Caco-2 (cell line): ENCODE measurements at regions of chr2 and their contacts with region 1.

Region 1: GRCh38 chr2:54531558-54531957 is 75.4 kb downstream of the SPTBN1 start:
- DNase-seq: no peak
- H3K4me3 ChIP-seq: no peak overlapping the region
- H3K4me3 Mint-ChIP-seq: no peak overlapping the region
- H3K27ac Mint-ChIP-seq: peak overlapping the region; percentile 99
- H3K4me1 ChIP-seq: peaks cover 39% of the 10 kb centered on the region
- H3K4me1 Mint-ChIP-seq: peaks cover 60% of the 10 kb centered on the region
- H3K27me3 ChIP-seq: no peaks in the 10 kb centered on the region
- H3K27me3 Mint-ChIP-seq: no peaks in the 10 kb centered on the region
- CTCF ChIP-seq: no peak

Region 2: GRCh38 chr2:54545702-54546450 is 14.3 kb after region 1 on chr2:
- CTCF ChIA-PET with region 1: interaction called, 3 read pairs
- POLR2A ChIA-PET with region 1: interaction called, 3 read pairs
- intact Hi-C with region 1: loop called (anchors 1 kb)
- DNase-seq: peak; percentile 55 to 67
- H3K4me3 ChIP-seq: no peak overlapping the region
- H3K4me3 Mint-ChIP-seq: no peak overlapping the region
- H3K27ac Mint-ChIP-seq: peak overlapping the region; percentile 75
- H3K4me1 ChIP-seq: peaks cover 53% of the 10 kb centered on the region
- H3K4me1 Mint-ChIP-seq: peaks cover 19% of the 10 kb centered on the region
- H3K27me3 ChIP-seq: no peaks in the 10 kb centered on the region
- H3K27me3 Mint-ChIP-seq: no peaks in the 10 kb centered on the region
- CTCF ChIP-seq: no peak

Region 3: GRCh38 chr2:54704688-54705605 is 173.4 kb after region 1 on chr2:
- CTCF ChIA-PET with region 1: no interaction called
- POLR2A ChIA-PET with region 1: no interaction called
- intact Hi-C with region 1: no loop called
- DNase-seq: peak; percentile 55 to 73
- H3K4me3 ChIP-seq: no peak overlapping the region
- H3K4me3 Mint-ChIP-seq: no peak overlapping the region
- H3K27ac Mint-ChIP-seq: no peak overlapping the region
- H3K4me1 ChIP-seq: peaks cover 35% of the 10 kb centered on the region
- H3K4me1 Mint-ChIP-seq: no peaks in the 10 kb centered on the region
- H3K27me3 ChIP-seq: no peaks in the 10 kb centered on the region
- H3K27me3 Mint-ChIP-seq: peaks cover 2% of the 10 kb centered on the region
- CTCF ChIP-seq: peak; percentile 43 to 54